ENCODE measurements at regions of chr22 and their contacts with region 1.

Region 1: GRCh38 chr22:50562523-50563412 is at the start of gene SYCE3:
- DNase-seq: peak; percentile 97
- H3K4me3 Mint-ChIP-seq: peak within 1 kb of the TSS; percentile 90
- H3K27ac Mint-ChIP-seq: peak within 1 kb of the TSS; percentile 91
- H3K4me1 Mint-ChIP-seq: peaks cover 28% of the 10 kb centered on the region
- H3K27me3 Mint-ChIP-seq: no peaks in the 10 kb centered on the region
- CTCF ChIP-seq: peak; percentile 91
- total RNA-seq, gene SYCE3: 0.82 and 1.2 TPM in 2 replicates

Region 2: GRCh38 chr22:50157709-50158375 is 404.9 kb before region 1 on chr22:
- CTCF ChIA-PET with region 1: no interaction called
- POLR2A ChIA-PET with region 1: no interaction called
- intact Hi-C with region 1: no loop called
- DNase-seq: peak; percentile 70
- H3K4me3 Mint-ChIP-seq: no peak overlapping the region
- H3K27ac Mint-ChIP-seq: no peak overlapping the region
- H3K4me1 Mint-ChIP-seq: peaks cover 11% of the 10 kb centered on the region
- H3K27me3 Mint-ChIP-seq: no peaks in the 10 kb centered on the region
- CTCF ChIP-seq: no peak

Region 3: DNA sequence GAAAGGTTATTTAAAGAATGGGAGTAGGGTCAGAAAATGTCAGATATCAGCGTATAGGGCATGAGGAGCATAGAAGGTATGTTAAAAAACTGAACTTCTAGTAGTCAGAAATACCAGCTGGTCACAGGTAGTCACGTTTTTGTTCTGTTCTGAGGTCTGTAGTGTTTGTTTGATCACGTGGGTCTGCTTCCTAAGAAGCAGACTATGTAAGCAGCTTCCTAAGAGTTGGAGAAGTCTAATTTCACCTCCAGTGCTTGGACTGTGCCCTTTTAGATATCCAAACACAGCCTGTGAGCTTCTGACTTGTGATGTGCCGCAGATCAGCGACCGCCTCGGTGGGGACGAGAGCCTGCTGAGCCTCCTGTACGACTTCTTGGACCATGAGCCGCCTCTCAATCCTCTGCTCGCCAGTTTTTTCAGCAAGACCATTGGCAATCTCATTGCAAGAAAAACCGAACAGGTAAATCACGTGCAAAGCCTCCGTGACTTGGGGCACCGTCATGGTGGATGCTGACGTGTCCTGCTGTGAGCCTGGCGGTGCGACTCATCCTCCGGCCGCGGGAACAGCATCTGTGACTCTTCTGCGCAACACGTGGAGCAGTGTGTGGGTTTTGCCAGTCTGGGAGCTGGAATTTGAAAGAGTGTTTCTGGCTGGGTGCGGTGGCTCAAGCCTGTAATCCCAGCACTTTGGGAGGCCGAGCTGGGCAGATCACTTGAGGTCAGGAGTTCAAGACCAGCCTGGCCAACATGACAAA is 156.2 kb before region 1 on chr22:
- CTCF ChIA-PET with region 1: no interaction called
- POLR2A ChIA-PET with region 1: no interaction called
- intact Hi-C with region 1: no loop called
- DNase-seq: no peak
- H3K4me3 Mint-ChIP-seq: no peak overlapping the region
- H3K27ac Mint-ChIP-seq: no peak overlapping the region
- H3K4me1 Mint-ChIP-seq: no peaks in the 10 kb centered on the region
- H3K27me3 Mint-ChIP-seq: no peaks in the 10 kb centered on the region
- CTCF ChIP-seq: no peak

Region 4: DNA sequence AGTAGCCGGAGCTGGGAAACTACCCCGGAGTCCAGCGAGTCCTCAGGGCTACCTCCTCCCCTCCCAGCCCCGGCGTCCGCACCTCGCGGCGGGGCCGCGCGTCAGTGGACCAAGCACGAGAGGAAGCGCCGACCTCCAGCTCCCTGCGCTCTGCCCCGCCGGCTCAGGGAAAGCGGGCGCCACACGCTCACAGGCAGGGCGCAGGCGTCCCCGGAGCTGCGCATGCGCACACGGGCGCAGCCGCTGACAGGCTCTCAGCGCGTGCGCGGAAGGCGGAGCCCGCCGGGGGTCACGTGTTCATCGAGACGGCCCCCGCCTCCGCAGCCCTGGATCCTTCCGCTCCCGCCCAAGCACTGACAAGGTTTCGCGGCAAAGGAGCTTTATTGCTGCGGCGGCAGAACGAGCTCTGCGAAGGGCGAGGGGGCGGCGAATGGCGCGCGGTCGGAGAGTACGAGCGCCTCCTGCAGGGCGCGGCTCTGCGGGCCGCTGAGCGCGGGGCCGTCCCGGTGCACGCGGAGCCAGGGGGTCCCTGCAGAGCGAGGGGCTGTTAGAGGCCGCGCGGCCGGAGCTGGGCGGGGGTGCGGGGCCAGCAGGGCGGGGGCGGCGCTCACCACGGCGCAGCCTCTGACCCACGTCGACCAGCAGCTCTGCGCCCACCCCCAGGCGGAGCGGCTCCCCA is 37.2 kb before region 1 on chr22 and contains the start of gene SCO2:
- CTCF ChIA-PET with region 1: interaction called, 17 read pairs
- POLR2A ChIA-PET with region 1: interaction called, 105 read pairs
- intact Hi-C with region 1: loop called (anchors 1 kb)
- DNase-seq: peak; percentile 96
- H3K4me3 Mint-ChIP-seq: peak within 1 kb of the TSS; percentile 85
- H3K27ac Mint-ChIP-seq: peak within 1 kb of the TSS; percentile 88
- H3K4me1 Mint-ChIP-seq: peaks cover 20% of the 10 kb centered on the region
- H3K27me3 Mint-ChIP-seq: no peaks in the 10 kb centered on the region
- CTCF ChIP-seq: peak; percentile 49
- total RNA-seq, gene SCO2: 2.4 and 5.4 TPM in 2 replicates

Region 5: DNA sequence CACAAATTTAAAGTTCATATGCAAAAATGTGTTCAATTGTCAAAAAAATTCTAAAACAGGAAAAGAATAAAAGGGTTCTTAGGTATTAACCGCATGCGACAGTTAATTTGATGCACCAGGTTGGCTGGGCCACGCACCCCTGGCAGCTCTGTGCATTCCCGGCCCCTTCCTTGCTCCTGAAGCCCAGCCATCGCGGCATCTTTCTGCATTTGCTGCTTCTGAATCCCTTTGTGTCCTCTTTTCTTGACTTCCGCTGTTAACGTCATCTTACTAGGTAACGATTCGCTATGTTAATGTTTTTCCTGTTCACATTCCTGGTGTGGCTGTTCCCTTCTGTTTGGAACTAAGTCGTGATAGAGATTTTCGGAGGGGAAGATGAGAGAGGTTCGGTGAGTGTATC is 25.0 kb before region 1 on chr22:
- CTCF ChIA-PET with region 1: interaction called, 10 read pairs
- POLR2A ChIA-PET with region 1: interaction called, 60 read pairs
- intact Hi-C with region 1: no loop called
- DNase-seq: no peak
- H3K4me3 Mint-ChIP-seq: no peak overlapping the region
- H3K27ac Mint-ChIP-seq: peak overlapping the region; percentile 85
- H3K4me1 Mint-ChIP-seq: peaks cover 40% of the 10 kb centered on the region
- H3K27me3 Mint-ChIP-seq: no peaks in the 10 kb centered on the region
- CTCF ChIP-seq: no peak

Region 6: DNA sequence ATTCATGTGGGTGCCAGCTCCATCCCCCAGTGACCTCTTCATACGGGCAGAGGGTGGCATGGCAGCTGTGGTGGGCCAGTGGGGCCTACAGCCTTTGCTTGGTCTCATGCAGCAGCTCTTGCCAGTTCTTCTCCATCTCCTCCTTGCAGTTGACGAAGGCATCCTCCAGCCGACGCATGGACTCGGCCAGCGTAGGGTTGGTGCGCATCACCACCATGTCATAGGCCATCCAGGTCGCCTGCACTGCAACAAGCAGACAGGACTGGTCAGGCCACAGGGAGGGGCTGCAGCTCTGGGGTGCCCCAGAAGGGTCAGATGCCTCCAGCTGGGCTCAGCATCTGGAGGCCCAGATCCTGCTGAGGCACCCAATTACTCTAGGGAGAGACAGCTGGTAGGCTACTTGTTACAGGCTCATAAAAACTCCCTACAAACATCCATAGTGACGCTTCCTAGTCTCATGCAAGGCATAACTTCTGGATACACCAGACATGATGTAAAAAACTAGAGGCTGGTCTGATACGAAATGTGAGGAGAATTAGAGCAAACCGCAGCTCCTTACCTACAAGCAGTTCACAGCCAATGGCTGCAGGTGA is 11.5 kb before region 1 on chr22:
- CTCF ChIA-PET with region 1: interaction called, 14 read pairs
- POLR2A ChIA-PET with region 1: interaction called, 3 read pairs
- intact Hi-C with region 1: no loop called
- DNase-seq: no peak
- H3K4me3 Mint-ChIP-seq: no peak overlapping the region
- H3K27ac Mint-ChIP-seq: no peak overlapping the region
- H3K4me1 Mint-ChIP-seq: no peaks in the 10 kb centered on the region
- H3K27me3 Mint-ChIP-seq: no peaks in the 10 kb centered on the region
- CTCF ChIP-seq: no peak

Region 7: GRCh38 chr22:50582562-50583293 is 20.0 kb after region 1 on chr22 and contains the start of gene CHKB:
- CTCF ChIA-PET with region 1: interaction called, 5 read pairs
- POLR2A ChIA-PET with region 1: interaction called, 38 read pairs
- intact Hi-C with region 1: no loop called
- DNase-seq: peak; percentile 98
- H3K4me3 Mint-ChIP-seq: peak within 1 kb of the TSS; percentile 94
- H3K27ac Mint-ChIP-seq: peak within 1 kb of the TSS; percentile 93
- H3K4me1 Mint-ChIP-seq: no peaks in the 10 kb centered on the region
- H3K27me3 Mint-ChIP-seq: no peaks in the 10 kb centered on the region
- CTCF ChIP-seq: no peak
- total RNA-seq, gene CHKB: 51.4 and 60.6 TPM in 2 replicates

Measured in MCF 10A (cell line).